B cell (primary cell): ENCODE measurements at regions of chr7 and their contacts with region 1.

Region 1: DNA sequence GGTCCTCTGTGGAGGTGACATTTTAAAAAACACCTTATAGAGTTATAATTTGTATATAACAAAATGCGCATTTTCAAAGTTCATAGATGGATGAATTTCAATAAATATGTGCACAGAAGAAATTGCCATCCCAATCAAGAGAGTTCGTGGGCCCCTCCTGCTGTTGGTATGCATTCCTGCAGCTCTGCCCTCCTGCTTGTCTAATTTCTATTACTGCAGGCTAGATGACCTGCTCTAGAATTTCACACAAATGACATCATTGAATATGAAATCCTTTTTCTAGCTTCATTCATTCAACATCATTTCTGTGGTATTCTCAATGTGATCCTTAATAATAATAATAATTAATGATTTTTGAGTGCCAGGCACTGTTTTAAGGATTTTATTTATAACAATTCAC is 348.2 kb downstream of the SDK1 start:
- DNase-seq: peak; percentile 18
- ATAC-seq: no peak
- H3K4me3 ChIP-seq: no peak overlapping the region
- H3K4me3 Mint-ChIP-seq: no peak overlapping the region
- H3K27ac ChIP-seq: no peak overlapping the region
- H3K27ac Mint-ChIP-seq: no peak overlapping the region
- H3K4me1 ChIP-seq: no peaks in the 10 kb centered on the region
- H3K4me1 Mint-ChIP-seq: no peaks in the 10 kb centered on the region
- H3K27me3 ChIP-seq: no peaks in the 10 kb centered on the region
- H3K27me3 Mint-ChIP-seq: no peaks in the 10 kb centered on the region
- CTCF ChIP-seq: peak; percentile 17

Region 2: DNA sequence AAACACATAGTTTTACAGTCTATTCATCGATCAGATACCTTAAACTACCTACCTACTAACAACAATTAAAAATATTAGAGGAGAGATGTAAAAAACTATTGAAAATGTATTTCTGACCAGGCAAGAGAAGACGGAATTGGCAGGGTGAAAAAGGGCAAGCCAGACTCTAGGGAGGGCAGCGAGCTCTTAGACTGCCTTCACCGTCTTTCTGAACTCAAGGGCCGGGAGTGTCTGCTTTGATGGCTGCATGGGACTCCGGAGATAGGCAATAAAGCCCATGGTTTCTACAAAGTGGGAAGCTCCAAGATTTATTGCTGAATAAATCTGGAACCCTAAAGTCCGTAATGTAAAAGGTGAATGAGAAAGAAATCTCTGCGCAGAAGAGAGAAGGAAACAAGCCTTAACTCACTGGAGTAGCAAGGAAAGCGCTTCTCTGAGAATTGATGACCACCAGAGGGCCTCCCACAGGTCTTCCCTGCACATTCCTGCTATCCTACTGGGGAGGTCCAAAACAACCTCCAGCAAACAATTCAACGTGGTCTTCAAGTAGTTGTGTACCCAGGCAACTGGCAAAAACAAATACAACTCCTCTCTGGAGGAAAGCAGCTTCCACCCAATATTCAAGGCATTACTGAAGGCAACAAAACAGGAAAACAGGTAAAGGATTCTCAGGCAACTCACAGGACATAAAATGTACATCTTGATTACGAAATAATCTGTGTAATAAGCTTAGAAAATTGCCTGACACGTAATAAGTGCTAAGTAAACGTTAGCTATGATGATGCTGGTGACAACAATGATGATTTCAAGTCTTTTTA is 166.9 kb before region 1 on chr7:
- CTCF ChIA-PET with region 1: no interaction called
- POLR2A ChIA-PET with region 1: no interaction called
- intact Hi-C with region 1: loop called (anchors 2 kb)
- DNase-seq: peak; percentile 38
- ATAC-seq: no peak
- H3K4me3 ChIP-seq: no peak overlapping the region
- H3K4me3 Mint-ChIP-seq: no peak overlapping the region
- H3K27ac ChIP-seq: no peak overlapping the region
- H3K27ac Mint-ChIP-seq: no peak overlapping the region
- H3K4me1 ChIP-seq: no peaks in the 10 kb centered on the region
- H3K4me1 Mint-ChIP-seq: peaks cover 4% of the 10 kb centered on the region
- H3K27me3 ChIP-seq: no peaks in the 10 kb centered on the region
- H3K27me3 Mint-ChIP-seq: peaks cover 8% of the 10 kb centered on the region
- CTCF ChIP-seq: peak; percentile 33

Region 3: DNA sequence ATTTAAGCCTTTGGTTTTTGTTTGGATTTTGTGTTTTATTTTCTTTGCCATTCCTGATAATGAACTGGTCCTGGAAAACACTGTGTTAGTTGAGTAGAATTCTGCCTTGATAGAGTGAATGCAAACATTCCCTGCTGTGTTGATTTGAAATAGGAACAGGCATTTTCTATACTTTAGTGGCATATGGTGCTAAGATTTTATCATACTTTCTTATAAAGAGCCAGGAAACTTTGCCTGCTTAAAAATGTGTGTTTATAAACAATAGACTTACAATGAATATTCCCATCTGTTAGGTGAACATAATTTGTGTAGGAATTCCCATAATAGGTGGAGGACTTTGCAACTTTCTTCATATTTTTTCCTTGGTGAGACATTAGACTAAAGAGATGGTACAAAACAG is 14.9 kb before region 1 on chr7:
- CTCF ChIA-PET with region 1: no interaction called
- POLR2A ChIA-PET with region 1: no interaction called
- intact Hi-C with region 1: no loop called
- DNase-seq: no peak
- ATAC-seq: no peak
- H3K4me3 ChIP-seq: no peak overlapping the region
- H3K4me3 Mint-ChIP-seq: no peak overlapping the region
- H3K27ac ChIP-seq: no peak overlapping the region
- H3K27ac Mint-ChIP-seq: no peak overlapping the region
- H3K4me1 ChIP-seq: no peaks in the 10 kb centered on the region
- H3K4me1 Mint-ChIP-seq: no peaks in the 10 kb centered on the region
- H3K27me3 ChIP-seq: no peaks in the 10 kb centered on the region
- H3K27me3 Mint-ChIP-seq: peaks cover 30% of the 10 kb centered on the region
- CTCF ChIP-seq: no peak

Region 4: GRCh38 chr7:4883374-4884144 is 1234.3 kb after region 1 on chr7 and contains the start of gene RADIL:
- CTCF ChIA-PET with region 1: no interaction called
- POLR2A ChIA-PET with region 1: interaction called, 11 read pairs
- intact Hi-C with region 1: no loop called
- DNase-seq: peak; percentile 76
- ATAC-seq: peak; percentile 87
- H3K4me3 ChIP-seq: peak within 1 kb of the TSS in 3 of 5 experiments; percentile 11 to 19 (median 12)
- H3K4me3 Mint-ChIP-seq: peak within 1 kb of the TSS; percentile 70
- H3K27ac ChIP-seq: no peak within 1 kb of the TSS
- H3K27ac Mint-ChIP-seq: no peak within 1 kb of the TSS
- H3K4me1 ChIP-seq: peaks cover 3 to 17% of the 10 kb centered on the region in 2 donors
- H3K4me1 Mint-ChIP-seq: peaks cover 13% of the 10 kb centered on the region
- H3K27me3 ChIP-seq: peaks cover 0 to 31% (median 12%) of the 10 kb centered on the region in 4 experiments
- H3K27me3 Mint-ChIP-seq: peaks cover 45% of the 10 kb centered on the region
- CTCF ChIP-seq: peak; percentile 60
- total RNA-seq, gene RADIL: not detected in 2 replicates